ENCODE measurements at regions of chr10 and their contacts with region 1.

Region 1: GRCh38 chr10:84211566-84211965 is 13.8 kb downstream of the LRIT2 start:
- DNase-seq: no peak
- H3K4me3 ChIP-seq: no peak overlapping the region
- H3K27ac ChIP-seq: no peak overlapping the region
- H3K4me1 ChIP-seq: no peaks in the 10 kb centered on the region
- H3K27me3 ChIP-seq: peaks cover 0 to 24% (median 13%) of the 10 kb centered on the region in 5 experiments

Region 2: DNA sequence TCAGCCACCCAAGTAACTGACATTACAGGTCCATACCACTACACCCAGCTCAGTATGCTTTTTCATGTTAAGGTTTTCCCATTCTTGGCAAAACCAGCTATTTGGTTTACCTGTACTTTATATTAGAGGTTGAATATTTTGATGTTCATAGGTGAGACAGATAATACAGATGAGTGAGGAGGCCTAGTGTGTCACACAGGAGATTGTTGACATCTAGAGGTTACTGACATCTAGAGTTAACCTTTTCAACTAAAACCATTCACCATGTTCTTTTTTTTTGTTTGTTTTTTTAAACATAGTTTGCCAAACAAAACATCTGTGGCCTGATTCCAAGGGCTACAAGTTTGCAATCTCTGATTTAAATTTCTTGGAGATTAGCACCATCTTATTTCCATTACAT is 64.2 kb before region 1 on chr10:
- CTCF ChIA-PET with region 1: interaction called, 30 read pairs
- POLR2A ChIA-PET with region 1: no interaction called
- DNase-seq: no peak
- H3K4me3 ChIP-seq: no peak overlapping the region
- H3K27ac ChIP-seq: no peak overlapping the region
- H3K4me1 ChIP-seq: no peaks in the 10 kb centered on the region
- H3K27me3 ChIP-seq: no peaks in the 10 kb centered on the region